ENCODE measurements at regions of chr3 and their contacts with region 1.

Region 1: DNA sequence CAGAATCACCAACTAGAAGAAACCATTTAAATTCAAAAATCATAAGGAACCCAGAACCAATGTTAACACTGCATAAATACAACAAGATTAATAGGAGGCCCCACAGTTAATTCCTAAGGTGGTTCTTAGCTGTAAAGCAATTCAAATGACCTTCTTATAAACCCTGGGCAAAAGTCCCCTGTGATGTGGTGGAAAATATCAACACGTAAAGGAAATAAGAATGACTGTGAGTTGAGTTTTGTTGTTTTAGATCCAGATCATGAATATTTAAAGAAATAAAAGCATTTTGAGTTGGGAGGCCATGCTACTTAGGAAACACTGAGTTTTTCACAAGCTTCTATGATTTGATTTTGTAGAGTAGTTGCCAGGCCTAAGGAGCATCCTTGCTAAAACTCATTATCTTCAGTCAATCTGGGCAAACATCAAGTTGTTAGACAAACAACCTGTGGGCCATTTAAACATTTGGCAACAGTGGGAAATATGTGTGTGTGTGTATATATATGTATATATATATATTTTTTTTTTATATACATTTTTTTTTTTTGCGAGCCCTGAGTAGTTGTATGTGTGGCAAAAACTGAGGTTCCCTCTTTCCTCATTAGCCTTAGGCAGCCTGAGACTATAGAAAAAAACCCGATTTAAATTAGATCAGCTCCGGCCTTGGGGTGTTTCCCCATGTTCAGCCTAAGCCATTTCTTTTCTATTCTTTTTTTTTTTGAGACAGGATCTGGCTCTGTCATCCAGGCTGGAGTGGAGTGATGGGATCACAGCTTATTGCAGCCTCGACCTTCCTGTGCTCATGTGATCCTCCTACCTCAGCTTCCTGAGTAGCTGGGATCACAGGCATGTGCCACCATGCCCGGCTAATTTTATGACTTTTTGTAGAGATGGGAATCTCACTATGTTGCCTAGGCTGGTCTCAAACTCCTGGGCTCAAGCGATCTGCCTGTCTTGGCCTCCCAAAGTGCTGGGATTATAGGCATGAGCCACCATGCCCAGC is 8.0 kb upstream of the PXK start:
- DNase-seq: no peak
- ATAC-seq: peak; percentile 47
- H3K4me3 Mint-ChIP-seq: peak overlapping the region; percentile 48
- H3K27ac Mint-ChIP-seq: peak overlapping the region; percentile 73
- H3K4me1 Mint-ChIP-seq: peaks cover 38% of the 10 kb centered on the region
- H3K27me3 Mint-ChIP-seq: no peaks in the 10 kb centered on the region
- CTCF ChIP-seq: no peak

Region 2: GRCh38 chr3:58355179-58355578 is 30.5 kb after region 1 on chr3:
- CTCF ChIA-PET with region 1: interaction called, 3 read pairs
- POLR2A ChIA-PET with region 1: interaction called, 16 read pairs
- intact Hi-C with region 1: loop called (anchors 5 kb)
- DNase-seq: no peak
- ATAC-seq: peak; percentile 54
- H3K4me3 Mint-ChIP-seq: peak overlapping the region; percentile 73
- H3K27ac Mint-ChIP-seq: peak overlapping the region; percentile 100
- H3K4me1 Mint-ChIP-seq: peaks cover 90% of the 10 kb centered on the region
- H3K27me3 Mint-ChIP-seq: no peaks in the 10 kb centered on the region
- CTCF ChIP-seq: no peak

Region 3: GRCh38 chr3:58414538-58415197 is 90.0 kb after region 1 on chr3:
- CTCF ChIA-PET with region 1: interaction called, 23 read pairs
- POLR2A ChIA-PET with region 1: no interaction called
- intact Hi-C with region 1: loop called (anchors 1 kb)
- DNase-seq: no peak
- ATAC-seq: peak; percentile 81
- H3K4me3 Mint-ChIP-seq: no peak overlapping the region
- H3K27ac Mint-ChIP-seq: no peak overlapping the region
- H3K4me1 Mint-ChIP-seq: peaks cover 48% of the 10 kb centered on the region
- H3K27me3 Mint-ChIP-seq: no peaks in the 10 kb centered on the region
- CTCF ChIP-seq: peak; percentile 55

Region 4: DNA sequence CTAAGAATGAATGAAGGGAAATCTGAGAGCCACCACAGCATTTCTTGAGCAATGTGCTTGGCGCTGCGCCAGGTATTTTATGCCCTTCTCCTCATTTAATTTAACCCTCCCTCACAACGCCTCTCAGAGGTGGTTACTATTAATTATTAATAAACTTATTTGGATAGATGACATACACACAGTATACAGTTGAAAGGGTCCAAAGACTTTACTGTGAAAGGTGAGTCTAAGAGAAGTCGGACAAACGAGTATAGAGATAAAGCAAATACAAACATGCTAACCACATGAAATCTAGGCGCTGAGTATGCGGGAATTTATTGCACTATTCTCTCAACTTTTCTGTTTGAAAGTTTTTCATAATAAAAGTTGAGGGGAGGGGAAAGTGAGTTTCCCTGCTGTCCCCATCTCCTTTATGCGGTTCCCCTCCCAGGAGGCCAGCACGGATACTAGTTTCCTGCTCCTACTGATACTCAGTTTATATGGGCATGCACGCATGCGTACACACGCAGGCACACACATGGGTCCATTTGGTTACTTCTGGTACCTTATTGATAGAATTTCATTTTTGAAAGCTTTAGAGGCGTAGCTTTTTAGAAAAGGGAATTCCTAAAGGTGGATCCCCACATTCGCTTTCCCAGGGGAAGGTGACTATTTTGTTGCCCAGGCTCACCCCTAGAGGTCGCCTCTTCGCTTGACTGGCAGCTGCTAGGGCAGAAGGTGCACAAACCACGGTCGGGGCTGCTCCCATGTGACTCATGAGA is 138.7 kb after region 1 on chr3:
- CTCF ChIA-PET with region 1: no interaction called
- POLR2A ChIA-PET with region 1: no interaction called
- intact Hi-C with region 1: loop called (anchors 1 kb)
- DNase-seq: peak; percentile 41
- ATAC-seq: peak; percentile 96
- H3K4me3 Mint-ChIP-seq: peak overlapping the region; percentile 47
- H3K27ac Mint-ChIP-seq: no peak overlapping the region
- H3K4me1 Mint-ChIP-seq: peaks cover 10% of the 10 kb centered on the region
- H3K27me3 Mint-ChIP-seq: no peaks in the 10 kb centered on the region
- CTCF ChIP-seq: peak; percentile 37

Region 5: DNA sequence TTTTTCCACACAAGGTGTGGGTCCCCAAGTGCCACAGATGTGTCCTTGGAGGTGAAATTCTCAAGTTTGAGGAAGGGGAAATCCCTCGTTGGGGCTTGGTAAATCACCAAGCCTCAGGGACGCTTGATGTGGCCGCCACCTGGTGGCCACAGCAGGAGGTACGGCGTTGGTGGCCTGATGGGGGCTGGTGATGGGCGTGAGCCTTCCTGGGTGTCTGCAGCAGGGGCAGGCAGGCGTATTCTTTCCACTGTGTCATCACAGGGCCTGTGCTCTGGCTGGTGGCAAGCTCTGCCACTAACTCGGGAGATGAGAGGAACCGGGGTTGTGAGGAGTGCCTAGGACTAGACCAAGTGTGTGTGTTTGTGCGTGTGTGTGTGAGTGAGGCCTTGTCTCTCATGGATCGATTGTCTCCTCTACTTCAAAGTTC is 208.1 kb after region 1 on chr3:
- CTCF ChIA-PET with region 1: interaction called, 6 read pairs
- POLR2A ChIA-PET with region 1: no interaction called
- intact Hi-C with region 1: loop called (anchors 1 kb)
- DNase-seq: peak; percentile 75
- ATAC-seq: peak; percentile 100
- H3K4me3 Mint-ChIP-seq: no peak overlapping the region
- H3K27ac Mint-ChIP-seq: no peak overlapping the region
- H3K4me1 Mint-ChIP-seq: peaks cover 7% of the 10 kb centered on the region
- H3K27me3 Mint-ChIP-seq: no peaks in the 10 kb centered on the region
- CTCF ChIP-seq: no peak

Region 6: DNA sequence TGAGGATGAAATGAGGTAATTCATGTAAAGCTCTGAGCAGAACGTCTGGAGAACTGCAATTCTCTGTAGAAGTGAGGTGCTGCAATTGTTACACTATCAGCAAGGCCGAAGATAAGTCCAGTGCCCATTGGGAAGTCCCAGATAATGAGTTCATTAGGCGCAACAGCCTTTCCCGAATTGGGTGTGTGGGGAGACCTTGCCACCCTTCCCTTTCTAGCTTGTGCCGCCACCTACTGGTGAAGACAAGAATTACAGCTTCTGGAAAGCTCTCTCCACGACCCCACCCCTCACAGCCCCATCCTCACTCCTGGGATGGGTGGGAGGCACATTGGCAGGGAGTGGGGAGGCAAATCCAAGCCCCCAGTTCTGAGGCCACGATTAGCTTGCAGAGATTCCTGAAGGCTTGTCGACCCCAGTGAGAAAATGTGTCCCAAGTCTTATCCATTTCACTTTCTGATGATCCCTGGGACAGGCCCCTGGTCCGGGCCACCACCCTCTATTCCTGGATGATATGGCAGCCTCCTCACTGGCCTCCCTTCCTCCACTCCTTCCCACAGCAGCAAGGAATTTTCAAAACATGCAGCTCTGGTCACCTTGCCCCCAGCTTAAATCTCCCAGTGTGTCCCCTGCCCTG is 305.5 kb after region 1 on chr3:
- CTCF ChIA-PET with region 1: interaction called, 3 read pairs
- POLR2A ChIA-PET with region 1: no interaction called
- intact Hi-C with region 1: loop called (anchors 5 kb)
- DNase-seq: peak; percentile 29
- ATAC-seq: peak; percentile 76
- H3K4me3 Mint-ChIP-seq: no peak overlapping the region
- H3K27ac Mint-ChIP-seq: no peak overlapping the region
- H3K4me1 Mint-ChIP-seq: peaks cover 1% of the 10 kb centered on the region
- H3K27me3 Mint-ChIP-seq: peaks cover 5% of the 10 kb centered on the region
- CTCF ChIP-seq: peak; percentile 96